ENCODE measurements at regions of chr3 and their contacts with region 1.

Region 1: DNA sequence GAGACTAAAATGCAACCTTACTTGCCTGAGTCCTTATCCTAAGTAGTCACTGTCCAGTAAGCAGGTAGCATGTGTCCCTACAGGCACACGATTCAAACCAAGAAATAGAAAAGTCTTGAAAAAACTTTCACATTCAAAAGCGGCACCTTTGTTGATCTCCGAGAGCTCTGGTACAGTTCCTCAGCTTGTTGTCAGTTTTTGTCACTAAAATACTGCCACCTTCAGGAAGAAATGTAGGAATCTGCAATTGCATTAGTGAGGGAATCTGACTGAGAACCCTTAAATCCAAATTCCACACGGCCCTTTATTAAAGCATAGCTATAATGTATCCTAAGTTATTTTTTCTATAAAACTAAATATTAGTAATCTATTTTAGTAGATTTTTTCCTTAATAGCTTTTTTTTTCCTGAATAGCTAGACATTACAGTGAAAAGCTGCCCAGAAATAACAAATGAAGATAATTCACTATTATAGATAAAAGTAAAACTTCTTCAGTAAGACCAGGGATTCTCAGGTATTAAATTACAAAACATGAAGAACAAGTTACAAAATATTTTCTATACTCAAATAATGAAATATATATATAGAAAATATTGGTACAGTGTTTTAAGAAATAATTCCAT is 44.0 kb downstream of the CCDC54 start:
- DNase-seq: peak; percentile 29
- H3K4me3 Mint-ChIP-seq: no peak overlapping the region
- H3K27ac Mint-ChIP-seq: no peak overlapping the region
- H3K4me1 Mint-ChIP-seq: peaks cover 2% of the 10 kb centered on the region
- H3K27me3 Mint-ChIP-seq: peaks cover 16% of the 10 kb centered on the region

Region 2: GRCh38 chr3:107235928-107236315 is 185.4 kb before region 1 on chr3:
- CTCF ChIA-PET with region 1: interaction called, 38 read pairs
- DNase-seq: peak; percentile 54
- H3K4me3 Mint-ChIP-seq: peak overlapping the region; percentile 61
- H3K27ac Mint-ChIP-seq: no peak overlapping the region
- H3K4me1 Mint-ChIP-seq: peaks cover 22% of the 10 kb centered on the region
- H3K27me3 Mint-ChIP-seq: peaks cover 28% of the 10 kb centered on the region

Region 3: DNA sequence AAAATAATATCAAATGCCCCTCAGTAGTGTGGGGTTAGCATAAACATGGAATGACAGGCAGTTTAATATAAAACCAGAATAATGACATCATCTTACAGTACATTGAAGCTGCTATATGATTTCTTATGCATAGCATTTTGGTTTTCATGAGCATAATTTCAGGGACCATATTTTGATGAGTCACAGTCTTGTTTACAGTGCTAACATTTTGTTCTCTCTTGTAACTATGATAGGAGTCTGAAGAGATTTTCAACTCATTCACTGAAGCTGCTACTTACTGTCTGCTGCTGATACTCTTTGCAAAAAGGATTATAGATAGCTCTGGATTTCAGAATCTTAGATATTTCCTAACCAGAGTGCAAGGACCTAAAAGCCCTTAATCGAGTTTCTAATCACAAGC is 136.7 kb before region 1 on chr3:
- CTCF ChIA-PET with region 1: interaction called, 10 read pairs
- DNase-seq: no peak
- H3K4me3 Mint-ChIP-seq: no peak overlapping the region
- H3K27ac Mint-ChIP-seq: no peak overlapping the region
- H3K4me1 Mint-ChIP-seq: no peaks in the 10 kb centered on the region
- H3K27me3 Mint-ChIP-seq: no peaks in the 10 kb centered on the region

Measured in activated naive CD4-positive, alpha-beta T cell treated with anti-CD3 and anti-CD28 coated beads, Interleukin-2, amount 10 ng/mL, durations not matched to agents 7 days and 5 days (primary cell).